ENCODE measurements at regions of chr6 and their contacts with region 1.

Region 1: GRCh38 chr6:37257634-37258404 is at the starts of genes TBC1D22B and TMEM217:
- DNase-seq: peak; percentile 98
- ATAC-seq: peak; percentile 99
- H3K4me3 Mint-ChIP-seq: peak within 1 kb of the TSS; percentile 74
- H3K27ac Mint-ChIP-seq: peak within 1 kb of the TSS; percentile 94
- H3K4me1 Mint-ChIP-seq: peaks cover 45% of the 10 kb centered on the region
- H3K27me3 Mint-ChIP-seq: no peaks in the 10 kb centered on the region
- total RNA-seq, gene TBC1D22B: 14.9 to 17.0 TPM
- total RNA-seq, gene TMEM217: 2.5 TPM

Region 2: DNA sequence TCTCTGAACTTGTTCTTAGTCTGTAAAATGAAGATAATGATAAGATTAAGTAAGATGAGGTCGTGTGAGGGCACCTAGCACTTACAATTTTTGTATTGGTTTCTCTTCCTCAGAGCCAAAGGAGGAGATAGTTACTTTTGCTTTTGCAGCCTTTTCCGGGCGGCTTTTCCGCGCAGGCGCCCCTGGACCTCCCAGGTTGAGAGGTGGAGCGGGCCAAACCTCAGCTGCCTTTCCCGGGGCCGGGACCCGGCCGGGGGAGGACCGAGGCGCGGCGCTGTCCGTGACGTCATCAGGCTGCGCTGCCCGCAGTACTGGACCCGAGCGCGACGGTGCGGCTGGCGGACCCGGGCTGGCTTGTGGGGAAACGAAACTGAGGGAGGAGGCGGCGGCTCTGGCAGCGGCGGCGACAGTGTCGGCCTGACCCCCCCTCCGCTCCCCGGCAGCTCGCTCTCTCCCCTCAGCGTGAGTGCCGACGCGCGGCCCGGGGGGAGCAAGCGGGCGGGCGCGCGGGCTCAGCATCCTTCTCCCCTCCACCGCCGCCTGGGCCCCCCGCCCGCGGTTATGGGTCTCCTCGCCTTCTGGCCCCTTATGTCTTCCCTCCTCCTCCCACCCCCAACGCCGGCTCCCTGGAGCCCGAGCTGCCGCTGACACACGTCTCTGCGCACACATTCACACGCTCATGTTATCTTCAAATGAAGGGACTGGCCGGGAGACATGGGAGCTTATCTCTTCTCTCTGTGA is 175.3 kb after region 1 on chr6 and contains the start of gene CMTR1:
- CTCF ChIA-PET with region 1: no interaction called
- POLR2A ChIA-PET with region 1: interaction called, 3 read pairs
- intact Hi-C with region 1: loop called in 1 of 2 experiments (anchors 1 kb)
- DNase-seq: peak; percentile 98
- ATAC-seq: peak; percentile 88
- H3K4me3 Mint-ChIP-seq: peak within 1 kb of the TSS; percentile 98
- H3K27ac Mint-ChIP-seq: peak within 1 kb of the TSS; percentile 99
- H3K4me1 Mint-ChIP-seq: peaks cover 36% of the 10 kb centered on the region
- H3K27me3 Mint-ChIP-seq: peaks cover 4% of the 10 kb centered on the region
- total RNA-seq, gene CMTR1: 65.3 to 74.6 TPM

Measured in activated CD4-positive, alpha-beta T cell treated with anti-CD3 and anti-CD28 coated beads for 36 hours (primary cell).